ENCODE measurements at regions of chr16 and their contacts with region 1.

Region 1: GRCh38 chr16:49928166-49929041 is 72.5 kb upstream of the ZNF423 start:
- DNase-seq: no peak
- H3K4me3 ChIP-seq: no peak overlapping the region
- H3K27ac ChIP-seq: no peak overlapping the region
- H3K4me1 ChIP-seq: no peaks in the 10 kb centered on the region
- H3K27me3 ChIP-seq: peaks cover 59% of the 10 kb centered on the region
- CTCF ChIP-seq: no peak

Region 2: DNA sequence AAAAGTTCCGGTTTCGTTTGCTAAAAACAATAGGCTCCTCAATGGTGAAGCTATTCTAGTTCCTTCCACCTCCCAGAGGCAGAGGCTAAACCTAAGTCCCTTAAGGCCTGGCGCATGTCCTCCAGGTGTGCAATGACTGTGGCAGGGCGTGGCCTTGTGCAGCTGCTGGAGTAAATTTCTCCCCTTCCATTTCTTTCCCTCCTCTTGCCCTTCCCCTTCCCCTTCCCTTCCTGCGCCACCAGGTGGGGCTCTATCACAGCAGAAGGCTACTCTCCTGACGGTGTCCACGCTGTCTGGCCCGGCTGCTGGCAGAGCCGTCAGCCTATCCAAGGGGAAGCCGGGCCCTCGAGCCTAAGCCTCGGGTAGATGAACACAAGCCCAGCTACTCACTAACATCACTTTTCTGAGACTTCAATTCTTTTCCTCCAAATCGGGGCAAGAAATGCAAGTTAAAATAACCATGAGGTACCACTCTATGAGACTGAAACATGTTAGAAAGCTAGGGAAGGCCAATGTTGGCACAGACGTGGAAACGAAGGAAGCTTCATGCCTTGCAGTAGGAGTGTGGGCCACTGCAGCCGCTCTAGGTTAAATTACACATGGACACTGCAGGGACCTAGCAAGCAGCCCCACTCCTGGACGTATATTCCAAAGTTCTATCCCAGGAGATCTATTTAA is 520.4 kb before region 1 on chr16:
- intact Hi-C with region 1: loop called (anchors 5 kb)
- DNase-seq: peak; percentile 85
- H3K4me3 ChIP-seq: no peak overlapping the region
- H3K27ac ChIP-seq: no peak overlapping the region
- H3K4me1 ChIP-seq: peaks cover 5% of the 10 kb centered on the region
- H3K27me3 ChIP-seq: peaks cover 23% of the 10 kb centered on the region
- CTCF ChIP-seq: peak; percentile 93

Region 3: DNA sequence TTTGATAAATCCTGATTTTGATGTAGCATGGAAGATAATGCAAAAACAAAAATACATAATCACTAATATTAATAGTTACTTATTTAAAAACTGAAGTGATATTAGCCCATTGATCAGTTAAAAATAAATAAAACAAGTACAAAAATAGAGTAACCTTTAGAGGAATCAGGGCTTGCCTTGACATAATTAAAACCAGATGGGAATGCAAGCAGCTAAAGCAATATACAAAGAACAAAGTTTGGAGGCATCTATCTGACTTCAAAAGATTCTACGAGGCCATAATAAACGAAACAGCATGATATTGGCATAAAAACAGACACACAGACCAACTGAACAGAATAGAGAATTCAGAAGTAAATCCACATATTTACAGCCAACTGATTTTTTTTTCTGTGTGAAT is 122.4 kb after region 1 on chr16:
- intact Hi-C with region 1: no loop called
- DNase-seq: no peak
- H3K4me3 ChIP-seq: no peak overlapping the region
- H3K27ac ChIP-seq: no peak overlapping the region
- H3K4me1 ChIP-seq: no peaks in the 10 kb centered on the region
- H3K27me3 ChIP-seq: peaks cover 15% of the 10 kb centered on the region
- CTCF ChIP-seq: no peak

Region 4: GRCh38 chr16:50102051-50102746 is 173.8 kb after region 1 on chr16:
- intact Hi-C with region 1: no loop called
- DNase-seq: no peak
- H3K4me3 ChIP-seq: no peak overlapping the region
- H3K27ac ChIP-seq: no peak overlapping the region
- H3K4me1 ChIP-seq: no peaks in the 10 kb centered on the region
- H3K27me3 ChIP-seq: no peaks in the 10 kb centered on the region
- CTCF ChIP-seq: no peak